ENCODE measurements at regions of chr7 and their contacts with region 1.

Region 1: DNA sequence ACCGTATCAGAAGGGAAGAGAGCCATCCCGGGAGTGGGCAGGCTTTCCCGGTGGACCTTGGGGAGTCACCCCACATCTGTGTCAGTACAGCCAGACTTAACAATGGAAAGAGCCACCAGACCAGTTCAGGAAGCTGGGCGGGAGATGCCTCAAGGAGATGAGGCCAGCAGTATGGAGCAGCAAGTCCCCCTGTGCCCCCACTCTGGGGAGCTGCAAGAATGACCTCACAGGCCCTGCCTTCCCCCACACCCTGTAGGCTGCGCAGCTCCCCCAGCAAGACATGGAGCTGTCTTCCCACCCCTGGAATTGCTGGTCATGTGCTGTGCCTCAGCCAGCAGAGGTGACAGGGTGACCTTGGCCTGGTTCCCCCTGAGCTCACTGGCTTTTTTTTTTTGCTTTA is 76.8 kb upstream of the INSIG1 start:
- DNase-seq: peak in 1 of 2 donors; percentile 34
- H3K4me3 ChIP-seq: no peak overlapping the region
- H3K27ac ChIP-seq: no peak overlapping the region
- H3K4me1 ChIP-seq: peaks cover 0 to 9% of the 10 kb centered on the region in 2 donors
- H3K27me3 ChIP-seq: peaks cover 0 to 12% of the 10 kb centered on the region in 2 donors
- CTCF ChIP-seq: no peak
- POLR2A ChIP-seq: no peak

Region 2: GRCh38 chr7:155261006-155262000 is 40.4 kb after region 1 on chr7:
- intact Hi-C with region 1: loop called (anchors 1 kb)
- DNase-seq: no peak
- H3K4me3 ChIP-seq: no peak overlapping the region
- H3K27ac ChIP-seq: no peak overlapping the region
- H3K4me1 ChIP-seq: peaks cover 0 to 9% of the 10 kb centered on the region in 2 donors
- H3K27me3 ChIP-seq: no peaks in the 10 kb centered on the region
- CTCF ChIP-seq: no peak
- POLR2A ChIP-seq: no peak